MCF 10A (cell line): ENCODE measurements at regions of chr7 and their contacts with region 1.

Region 1: DNA sequence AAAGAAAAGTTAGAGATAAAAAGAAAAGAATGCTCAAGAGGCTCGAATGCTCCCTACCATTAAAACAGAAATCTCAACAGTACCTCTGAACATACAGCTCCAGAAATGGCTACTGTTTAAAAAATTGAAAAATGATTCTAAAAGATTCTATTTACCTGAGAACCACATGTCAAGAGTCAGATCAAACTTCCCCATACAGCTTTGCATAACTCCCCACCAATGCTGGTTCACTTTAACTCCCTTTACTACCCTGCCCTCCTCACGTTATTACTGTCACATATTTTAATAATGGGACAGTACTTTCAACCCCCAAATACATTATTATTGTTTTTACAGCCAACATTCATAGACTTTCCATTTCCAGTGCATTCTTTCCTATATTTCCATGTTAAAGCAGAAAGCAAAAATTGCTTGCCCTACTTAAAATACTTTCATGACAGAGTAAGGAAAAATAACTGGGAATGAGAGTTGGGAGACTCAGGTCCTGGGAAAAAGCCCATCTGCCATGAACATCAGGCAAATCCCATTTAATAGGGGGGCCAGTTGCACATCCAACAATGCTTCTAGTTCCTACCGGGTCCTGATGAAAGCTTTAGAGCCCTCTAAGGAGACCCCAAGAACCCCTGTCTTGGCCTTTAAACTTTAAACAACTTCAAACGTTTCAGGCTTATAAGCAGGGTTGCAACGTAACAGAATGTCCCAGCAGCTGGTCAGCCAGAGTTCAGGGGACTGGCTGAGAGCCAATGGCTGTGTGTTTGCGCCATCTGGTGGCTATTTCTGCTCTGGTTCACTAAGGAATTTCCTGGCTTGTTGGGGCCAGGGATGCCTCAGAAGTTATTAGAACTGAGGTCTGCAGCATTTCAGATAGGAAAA is 247.4 kb downstream of the ELMO1 start:
- DNase-seq: peak; percentile 79
- H3K4me3 Mint-ChIP-seq: no peak overlapping the region
- H3K27ac Mint-ChIP-seq: no peak overlapping the region
- H3K4me1 Mint-ChIP-seq: peaks cover 6% of the 10 kb centered on the region
- H3K27me3 Mint-ChIP-seq: no peaks in the 10 kb centered on the region
- CTCF ChIP-seq: peak; percentile 86

Region 2: GRCh38 chr7:36473454-36474282 is 727.6 kb before region 1 on chr7:
- CTCF ChIA-PET with region 1: interaction called, 11 read pairs
- POLR2A ChIA-PET with region 1: no interaction called
- intact Hi-C with region 1: loop called (anchors 5 kb)
- DNase-seq: peak; percentile 91
- H3K4me3 Mint-ChIP-seq: peak overlapping the region; percentile 20
- H3K27ac Mint-ChIP-seq: peak overlapping the region; percentile 14
- H3K4me1 Mint-ChIP-seq: peaks cover 19% of the 10 kb centered on the region
- H3K27me3 Mint-ChIP-seq: no peaks in the 10 kb centered on the region
- CTCF ChIP-seq: peak; percentile 39

Region 3: GRCh38 chr7:36478745-36479144 is 722.5 kb before region 1 on chr7:
- CTCF ChIA-PET with region 1: interaction called, 11 read pairs
- POLR2A ChIA-PET with region 1: no interaction called
- intact Hi-C with region 1: loop called (anchors 5 kb)
- DNase-seq: no peak
- H3K4me3 Mint-ChIP-seq: no peak overlapping the region
- H3K27ac Mint-ChIP-seq: no peak overlapping the region
- H3K4me1 Mint-ChIP-seq: peaks cover 9% of the 10 kb centered on the region
- H3K27me3 Mint-ChIP-seq: no peaks in the 10 kb centered on the region
- CTCF ChIP-seq: no peak

Region 4: GRCh38 chr7:36487756-36488336 is 713.4 kb before region 1 on chr7:
- CTCF ChIA-PET with region 1: interaction called, 154 read pairs
- POLR2A ChIA-PET with region 1: interaction called, 4 read pairs
- intact Hi-C with region 1: loop called (anchors 1 kb)
- DNase-seq: peak; percentile 74
- H3K4me3 Mint-ChIP-seq: no peak overlapping the region
- H3K27ac Mint-ChIP-seq: no peak overlapping the region
- H3K4me1 Mint-ChIP-seq: peaks cover 16% of the 10 kb centered on the region
- H3K27me3 Mint-ChIP-seq: no peaks in the 10 kb centered on the region
- CTCF ChIP-seq: peak; percentile 93

Region 5: GRCh38 chr7:36967387-36967786 is 233.9 kb before region 1 on chr7:
- CTCF ChIA-PET with region 1: interaction called, 9 read pairs
- POLR2A ChIA-PET with region 1: no interaction called
- intact Hi-C with region 1: loop called (anchors 1 kb)
- DNase-seq: peak; percentile 73
- H3K4me3 Mint-ChIP-seq: no peak overlapping the region
- H3K27ac Mint-ChIP-seq: no peak overlapping the region
- H3K4me1 Mint-ChIP-seq: no peaks in the 10 kb centered on the region
- H3K27me3 Mint-ChIP-seq: no peaks in the 10 kb centered on the region
- CTCF ChIP-seq: peak; percentile 71

Region 6: DNA sequence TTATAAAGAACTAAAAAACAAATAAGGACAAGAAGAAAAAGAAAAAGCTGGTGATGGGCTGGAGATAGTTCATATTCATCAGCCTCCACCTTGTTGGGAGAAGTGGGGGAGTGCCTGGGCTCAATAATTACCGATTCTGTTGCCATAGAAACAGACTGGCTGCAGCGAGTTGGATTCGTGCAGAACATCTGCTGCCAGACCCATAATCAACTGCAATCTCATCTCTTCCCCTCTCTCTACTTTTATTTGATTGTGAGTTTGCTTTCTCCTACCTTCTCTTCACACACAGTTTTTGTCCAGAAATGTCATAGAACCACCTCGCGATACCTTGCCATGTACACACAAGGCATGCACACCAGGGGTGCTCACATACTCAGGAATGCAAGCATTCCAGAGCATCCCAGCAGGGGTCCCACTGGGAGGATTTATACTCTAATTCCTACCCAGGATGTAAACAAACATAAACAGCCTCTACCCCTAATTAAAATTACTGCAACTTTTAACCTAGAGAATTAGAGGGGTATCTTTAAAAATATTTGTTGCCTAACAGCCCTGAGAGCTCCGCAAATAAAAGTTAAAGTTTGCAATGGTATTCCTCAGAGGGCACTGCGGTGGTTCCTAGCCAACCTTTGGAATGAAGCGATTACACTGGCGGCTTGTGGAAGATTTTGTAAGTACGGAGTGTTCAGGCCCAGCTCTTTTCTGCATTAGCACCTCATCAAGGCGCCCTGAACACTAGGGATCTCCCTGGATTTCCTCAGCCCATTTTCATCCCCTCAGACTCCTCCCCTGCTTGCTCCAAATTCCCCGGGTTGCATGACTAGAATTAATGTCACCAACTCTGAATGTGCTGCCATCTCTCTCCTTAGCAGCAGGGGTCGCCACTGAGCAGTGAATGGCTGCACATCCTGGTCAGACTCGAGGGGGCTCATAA is 214.5 kb before region 1 on chr7:
- CTCF ChIA-PET with region 1: interaction called, 19 read pairs
- POLR2A ChIA-PET with region 1: no interaction called
- intact Hi-C with region 1: no loop called
- DNase-seq: peak; percentile 62
- H3K4me3 Mint-ChIP-seq: no peak overlapping the region
- H3K27ac Mint-ChIP-seq: no peak overlapping the region
- H3K4me1 Mint-ChIP-seq: no peaks in the 10 kb centered on the region
- H3K27me3 Mint-ChIP-seq: peaks cover 73% of the 10 kb centered on the region
- CTCF ChIP-seq: peak; percentile 84